ENCODE measurements at regions of chr1 and their contacts with region 1.

Region 1: GRCh38 chr1:42335050-42335808 is at the start of gene FOXJ3:
- DNase-seq: peak; percentile 89 to 91 (median 90)
- H3K4me3 ChIP-seq: peak within 1 kb of the TSS; percentile 62 to 92
- H3K4me3 Mint-ChIP-seq: peak within 1 kb of the TSS; percentile 93 to 97 (median 95)
- H3K27ac ChIP-seq: peak within 1 kb of the TSS; percentile 83
- H3K27ac Mint-ChIP-seq: peak within 1 kb of the TSS; percentile 94 to 96 (median 95)
- H3K4me1 ChIP-seq: peaks cover 41% of the 10 kb centered on the region
- H3K4me1 Mint-ChIP-seq: peaks cover 33 to 54% (median 44%) of the 10 kb centered on the region in 4 donors
- H3K27me3 ChIP-seq: no peaks in the 10 kb centered on the region
- H3K27me3 Mint-ChIP-seq: no peaks in the 10 kb centered on the region
- total RNA-seq, gene FOXJ3: 97.4 to 102 TPM

Region 2: GRCh38 chr1:42035830-42036604 is 299.2 kb before region 1 on chr1:
- CTCF ChIA-PET with region 1: no interaction called
- POLR2A ChIA-PET with region 1: no interaction called
- intact Hi-C with region 1: loop called (anchors 10 kb)
- DNase-seq: peak; percentile 95 to 98 (median 96)
- H3K4me3 ChIP-seq: peak overlapping the region; percentile 67 to 71
- H3K4me3 Mint-ChIP-seq: peak overlapping the region; percentile 80 to 85 (median 84)
- H3K27ac ChIP-seq: peak overlapping the region; percentile 40
- H3K27ac Mint-ChIP-seq: peak overlapping the region in 5 of 7 donors; percentile 31 to 85 (median 72)
- H3K4me1 ChIP-seq: peaks cover 39% of the 10 kb centered on the region
- H3K4me1 Mint-ChIP-seq: peaks cover 28 to 47% (median 35%) of the 10 kb centered on the region in 4 donors
- H3K27me3 ChIP-seq: no peaks in the 10 kb centered on the region
- H3K27me3 Mint-ChIP-seq: no peaks in the 10 kb centered on the region

Region 3: GRCh38 chr1:42319128-42319851 is 15.9 kb before region 1 on chr1:
- CTCF ChIA-PET with region 1: interaction called, 11 read pairs
- POLR2A ChIA-PET with region 1: interaction called, 32 read pairs
- intact Hi-C with region 1: loop called (anchors 1 kb)
- DNase-seq: peak in 3 of 5 donors; percentile 5 to 59 (median 23)
- H3K4me3 ChIP-seq: peak overlapping the region in 1 of 2 donors; percentile 6
- H3K4me3 Mint-ChIP-seq: peak overlapping the region; percentile 73 to 92 (median 82)
- H3K27ac ChIP-seq: peak overlapping the region; percentile 51
- H3K27ac Mint-ChIP-seq: peak overlapping the region; percentile 85 to 94 (median 91)
- H3K4me1 ChIP-seq: peaks cover 92% of the 10 kb centered on the region
- H3K4me1 Mint-ChIP-seq: peaks cover 73 to 95% (median 88%) of the 10 kb centered on the region in 4 donors
- H3K27me3 ChIP-seq: no peaks in the 10 kb centered on the region
- H3K27me3 Mint-ChIP-seq: no peaks in the 10 kb centered on the region

Region 4: GRCh38 chr1:42479599-42479998 is 144.4 kb after region 1 on chr1:
- CTCF ChIA-PET with region 1: no interaction called
- POLR2A ChIA-PET with region 1: no interaction called
- intact Hi-C with region 1: no loop called
- DNase-seq: no peak
- H3K4me3 ChIP-seq: no peak overlapping the region
- H3K4me3 Mint-ChIP-seq: no peak overlapping the region
- H3K27ac ChIP-seq: no peak overlapping the region
- H3K27ac Mint-ChIP-seq: no peak overlapping the region
- H3K4me1 ChIP-seq: no peaks in the 10 kb centered on the region
- H3K4me1 Mint-ChIP-seq: no peaks in the 10 kb centered on the region
- H3K27me3 ChIP-seq: no peaks in the 10 kb centered on the region
- H3K27me3 Mint-ChIP-seq: no peaks in the 10 kb centered on the region

Region 5: DNA sequence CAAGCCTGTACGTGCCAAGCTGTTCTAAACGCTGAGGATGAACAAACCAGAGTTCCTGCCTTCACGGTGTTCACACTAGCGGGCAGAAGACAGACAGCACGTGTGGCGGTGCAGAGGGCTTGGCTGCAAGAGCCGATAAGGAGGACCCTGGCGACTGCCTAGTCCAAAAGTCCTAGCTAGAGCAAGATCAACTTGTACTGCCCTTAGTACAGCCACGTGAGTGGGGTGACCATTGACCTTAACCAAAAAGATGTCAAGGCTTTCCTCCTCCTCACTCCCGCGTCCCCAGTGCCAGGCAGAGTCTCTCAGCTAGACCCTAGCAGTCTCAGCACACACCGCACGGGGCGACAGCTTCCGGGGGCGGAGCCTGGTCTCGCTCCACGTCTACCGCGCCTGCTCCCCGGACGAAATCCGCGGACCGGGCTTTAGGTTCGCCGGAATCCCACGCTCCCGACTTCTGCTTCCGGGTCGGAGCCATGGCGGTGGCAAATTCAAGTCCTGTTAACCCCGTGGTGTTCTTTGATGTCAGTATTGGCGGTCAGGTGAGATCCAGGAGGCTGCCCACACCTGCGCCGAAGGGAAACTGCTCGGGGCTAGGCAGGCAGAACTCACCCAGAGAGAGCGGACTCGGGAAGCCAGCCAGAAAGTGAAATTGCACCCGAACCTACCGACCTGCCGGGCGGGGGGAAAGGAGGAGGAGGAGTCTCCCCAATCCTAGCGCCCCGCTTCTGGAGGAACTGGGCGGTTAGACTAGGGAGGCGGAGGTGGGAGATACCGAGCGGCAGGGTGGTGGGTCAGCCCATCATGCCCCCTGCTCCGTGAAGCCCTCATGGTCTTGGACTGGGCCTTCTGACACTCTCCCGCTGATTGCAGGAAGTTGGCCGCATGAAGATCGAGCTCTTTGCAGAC is 323.0 kb after region 1 on chr1 and contains the start of gene PPIH:
- CTCF ChIA-PET with region 1: no interaction called
- POLR2A ChIA-PET with region 1: no interaction called
- intact Hi-C with region 1: loop called (anchors 10 kb)
- DNase-seq: peak; percentile 92 to 96 (median 93)
- H3K4me3 ChIP-seq: peak within 1 kb of the TSS; percentile 81 to 89
- H3K4me3 Mint-ChIP-seq: peak within 1 kb of the TSS; percentile 94 to 100 (median 98)
- H3K27ac ChIP-seq: peak within 1 kb of the TSS; percentile 65
- H3K27ac Mint-ChIP-seq: peak within 1 kb of the TSS; percentile 94 to 98 (median 95)
- H3K4me1 ChIP-seq: peaks cover 26% of the 10 kb centered on the region
- H3K4me1 Mint-ChIP-seq: peaks cover 21 to 47% (median 35%) of the 10 kb centered on the region in 4 donors
- H3K27me3 ChIP-seq: no peaks in the 10 kb centered on the region
- H3K27me3 Mint-ChIP-seq: no peaks in the 10 kb centered on the region
- total RNA-seq, gene PPIH: 40.5 to 42.9 TPM

Region 6: GRCh38 chr1:42747125-42747524 is 411.9 kb after region 1 on chr1:
- CTCF ChIA-PET with region 1: interaction called, 3 read pairs
- POLR2A ChIA-PET with region 1: no interaction called
- intact Hi-C with region 1: loop called (anchors 5 kb)
- DNase-seq: peak in 4 of 5 donors; percentile 17 to 38 (median 33)
- H3K4me3 ChIP-seq: no peak overlapping the region
- H3K4me3 Mint-ChIP-seq: no peak overlapping the region
- H3K27ac ChIP-seq: no peak overlapping the region
- H3K27ac Mint-ChIP-seq: no peak overlapping the region
- H3K4me1 ChIP-seq: no peaks in the 10 kb centered on the region
- H3K4me1 Mint-ChIP-seq: no peaks in the 10 kb centered on the region
- H3K27me3 ChIP-seq: no peaks in the 10 kb centered on the region
- H3K27me3 Mint-ChIP-seq: no peaks in the 10 kb centered on the region

Measured in CD4-positive, alpha-beta memory T cell (primary cell).